ENCODE measurements at regions of chrX and their contacts with region 1.

Region 1: DNA sequence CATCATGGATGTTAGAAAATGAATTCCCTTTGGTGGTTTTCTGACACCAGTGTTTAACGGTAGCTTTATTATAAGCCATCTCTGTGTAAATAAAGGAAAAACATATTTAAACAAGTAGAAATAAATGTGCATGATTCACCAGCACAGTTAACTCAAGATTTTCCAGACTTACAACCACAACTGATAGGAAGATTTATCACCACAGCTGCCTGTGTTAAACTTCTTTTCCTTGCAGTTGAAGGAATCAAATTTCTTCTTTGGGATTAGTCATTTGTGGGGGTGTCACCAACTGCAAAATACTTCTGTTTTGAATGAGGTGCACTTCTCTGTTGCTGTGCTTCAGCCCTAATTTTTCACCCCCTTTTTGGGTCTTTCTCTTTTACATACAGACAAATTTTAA is 128.1 kb upstream of the STK26 start:
- DNase-seq: no peak
- H3K4me3 Mint-ChIP-seq: no peak overlapping the region
- H3K27ac Mint-ChIP-seq: peak overlapping the region; percentile 42
- H3K4me1 Mint-ChIP-seq: peaks cover 10% of the 10 kb centered on the region
- H3K27me3 Mint-ChIP-seq: no peaks in the 10 kb centered on the region

Region 2: GRCh38 chrX:132017431-132018185 is 122.6 kb after region 1 on chrX:
- intact Hi-C with region 1: loop called (anchors 5 kb)
- DNase-seq: no peak
- H3K4me3 Mint-ChIP-seq: no peak overlapping the region
- H3K27ac Mint-ChIP-seq: peak overlapping the region; percentile 73
- H3K4me1 Mint-ChIP-seq: peaks cover 37% of the 10 kb centered on the region
- H3K27me3 Mint-ChIP-seq: no peaks in the 10 kb centered on the region